ENCODE measurements at regions of chr14 and their contacts with region 1.

Region 1: DNA sequence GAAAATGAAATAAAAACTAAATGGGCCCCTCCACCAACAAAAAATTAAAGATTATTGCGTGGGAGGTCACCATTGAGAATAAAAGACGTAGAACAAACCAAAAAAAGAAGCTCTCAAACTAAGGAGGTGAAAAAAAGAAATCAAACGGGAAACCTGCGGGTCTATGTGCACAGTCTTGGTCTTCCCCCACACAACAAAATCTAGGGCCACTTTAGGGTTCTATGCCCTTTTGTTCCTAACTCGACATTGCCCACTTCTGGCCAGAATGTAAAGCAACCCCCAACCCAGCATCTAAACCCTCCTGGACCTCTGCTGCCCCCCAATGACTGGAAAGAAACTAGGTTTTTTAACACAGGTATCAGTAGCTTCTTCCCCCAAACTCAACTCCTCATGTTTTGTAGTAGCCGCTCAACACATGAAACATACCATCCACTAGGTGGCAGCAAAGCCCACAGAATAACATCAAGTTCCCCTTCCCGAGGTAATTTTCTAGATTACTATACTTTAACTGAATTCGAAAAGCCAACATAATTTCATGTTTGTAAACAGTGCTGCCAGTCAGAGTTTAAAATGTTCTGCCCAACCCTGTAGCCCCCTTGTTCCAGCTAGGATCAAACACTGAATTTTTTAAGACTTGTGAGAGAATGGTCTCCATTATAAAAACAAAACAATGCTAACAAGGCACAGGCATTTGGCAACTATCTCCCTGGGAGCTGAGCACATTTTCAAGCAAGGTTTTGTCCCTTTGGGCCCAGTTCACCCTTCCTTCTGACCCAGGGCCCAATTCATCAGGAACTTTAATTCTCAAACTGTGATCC is 18.7 kb downstream of the DAD1 start:
- DNase-seq: peak; percentile 78 to 89
- ATAC-seq: peak; percentile 82 to 87
- H3K4me3 ChIP-seq: no peak overlapping the region
- H3K27ac ChIP-seq: peak overlapping the region; percentile 51 to 80; a peak in 5 of 6 replicates
- H3K4me1 ChIP-seq: peaks cover 37% of the 10 kb centered on the region
- CTCF ChIP-seq: peak; percentile 95
- EP300 ChIP-seq: no peak
- POLR2A ChIP-seq: no peak
- RAD21 ChIP-seq: peak; percentile 92 to 95

Region 2: GRCh38 chr14:22491683-22492621 is 78.4 kb before region 1 on chr14:
- CTCF ChIA-PET with region 1: no interaction called
- POLR2A ChIA-PET with region 1: no interaction called
- DNase-seq: no peak
- ATAC-seq: no peak
- H3K4me3 ChIP-seq: no peak overlapping the region
- H3K27ac ChIP-seq: no peak overlapping the region
- H3K4me1 ChIP-seq: no peaks in the 10 kb centered on the region
- CTCF ChIP-seq: no peak
- EP300 ChIP-seq: no peak
- POLR2A ChIP-seq: no peak
- RAD21 ChIP-seq: no peak

Region 3: GRCh38 chr14:22589096-22589839 is 18.9 kb after region 1 on chr14 and contains the start of gene DAD1:
- CTCF ChIA-PET with region 1: interaction called, 102 read pairs
- POLR2A ChIA-PET with region 1: interaction called, 7 read pairs
- DNase-seq: peak; percentile 99
- ATAC-seq: peak; percentile 96
- H3K4me3 ChIP-seq: peak within 1 kb of the TSS; percentile 80
- H3K27ac ChIP-seq: peak within 1 kb of the TSS; percentile 79 to 90
- H3K4me1 ChIP-seq: peaks cover 32% of the 10 kb centered on the region
- CTCF ChIP-seq: no peak; the same call in 2 of the 3 replicates
- EP300 ChIP-seq: no peak
- POLR2A ChIP-seq: peak; percentile 89
- RAD21 ChIP-seq: 0 out of 5 replicates have a peak, but pooled peaks of 1 of the 2 experiments have one; percentile 26
- polyA plus RNA-seq, gene DAD1: 458 and 474 TPM in 2 replicates

Region 4: DNA sequence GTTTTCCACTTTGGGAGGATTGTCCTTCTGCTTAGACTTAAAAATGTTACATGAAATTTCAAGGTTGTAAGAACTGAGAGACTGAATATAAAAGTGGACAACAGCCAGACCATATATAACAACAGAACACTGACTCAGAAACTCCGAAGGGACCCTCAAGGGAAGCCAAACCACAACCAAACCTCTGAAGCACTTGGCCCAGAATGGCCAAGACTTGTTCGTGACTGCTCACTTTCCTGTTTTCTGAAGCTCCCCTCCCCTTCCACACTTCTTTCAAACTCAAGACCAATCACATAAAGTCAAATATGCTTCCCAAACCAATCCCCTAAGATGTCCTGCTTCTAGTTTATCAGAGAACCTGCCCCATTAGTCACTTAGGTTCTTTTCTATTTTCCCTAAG is 60.1 kb after region 1 on chr14:
- CTCF ChIA-PET with region 1: interaction called, 10 read pairs
- POLR2A ChIA-PET with region 1: no interaction called
- DNase-seq: no peak
- ATAC-seq: no peak
- H3K4me3 ChIP-seq: no peak overlapping the region
- H3K27ac ChIP-seq: no peak overlapping the region
- H3K4me1 ChIP-seq: no peaks in the 10 kb centered on the region
- CTCF ChIP-seq: no peak
- EP300 ChIP-seq: no peak
- POLR2A ChIP-seq: no peak
- RAD21 ChIP-seq: no peak

Region 5: GRCh38 chr14:22766456-22767322 is 196.3 kb after region 1 on chr14 and contains the start of gene OXA1L:
- CTCF ChIA-PET with region 1: interaction called, 19 read pairs
- POLR2A ChIA-PET with region 1: interaction called, 3 read pairs
- DNase-seq: peak; percentile 92 to 97
- ATAC-seq: peak; percentile 91
- H3K4me3 ChIP-seq: peak within 1 kb of the TSS; percentile 66
- H3K27ac ChIP-seq: peak within 1 kb of the TSS; percentile 91 to 92
- H3K4me1 ChIP-seq: peaks cover 12% of the 10 kb centered on the region
- CTCF ChIP-seq: no peak
- EP300 ChIP-seq: no peak
- POLR2A ChIP-seq: peak; percentile 85
- RAD21 ChIP-seq: no peak
- polyA plus RNA-seq, gene OXA1L: 199 and 247 TPM in 2 replicates

Region 6: GRCh38 chr14:22829661-22830442 is 259.5 kb after region 1 on chr14 and contains the start of gene MRPL52:
- CTCF ChIA-PET with region 1: interaction called, 20 read pairs
- POLR2A ChIA-PET with region 1: no interaction called
- DNase-seq: peak; percentile 88 to 90
- ATAC-seq: peak; percentile 95 to 98
- H3K4me3 ChIP-seq: peak within 1 kb of the TSS; percentile 67
- H3K27ac ChIP-seq: peak within 1 kb of the TSS; percentile 81 to 93
- H3K4me1 ChIP-seq: peaks cover 8% of the 10 kb centered on the region
- CTCF ChIP-seq: no peak
- EP300 ChIP-seq: no peak
- POLR2A ChIP-seq: peak; percentile 77
- RAD21 ChIP-seq: no peak
- polyA plus RNA-seq, gene MRPL52: 113 and 116 TPM in 2 replicates

Region 7: GRCh38 chr14:22865424-22866405 is 295.4 kb after region 1 on chr14:
- CTCF ChIA-PET with region 1: interaction called, 22 read pairs
- POLR2A ChIA-PET with region 1: no interaction called
- DNase-seq: no peak
- ATAC-seq: peak; percentile 52 to 56; a peak in 4 of 6 replicates
- H3K4me3 ChIP-seq: no peak overlapping the region
- H3K27ac ChIP-seq: no peak overlapping the region
- H3K4me1 ChIP-seq: peaks cover 12% of the 10 kb centered on the region
- CTCF ChIP-seq: no peak
- EP300 ChIP-seq: no peak
- POLR2A ChIP-seq: no peak
- RAD21 ChIP-seq: no peak